ENCODE measurements at regions of chr14 and their contacts with region 1.

Region 1: DNA sequence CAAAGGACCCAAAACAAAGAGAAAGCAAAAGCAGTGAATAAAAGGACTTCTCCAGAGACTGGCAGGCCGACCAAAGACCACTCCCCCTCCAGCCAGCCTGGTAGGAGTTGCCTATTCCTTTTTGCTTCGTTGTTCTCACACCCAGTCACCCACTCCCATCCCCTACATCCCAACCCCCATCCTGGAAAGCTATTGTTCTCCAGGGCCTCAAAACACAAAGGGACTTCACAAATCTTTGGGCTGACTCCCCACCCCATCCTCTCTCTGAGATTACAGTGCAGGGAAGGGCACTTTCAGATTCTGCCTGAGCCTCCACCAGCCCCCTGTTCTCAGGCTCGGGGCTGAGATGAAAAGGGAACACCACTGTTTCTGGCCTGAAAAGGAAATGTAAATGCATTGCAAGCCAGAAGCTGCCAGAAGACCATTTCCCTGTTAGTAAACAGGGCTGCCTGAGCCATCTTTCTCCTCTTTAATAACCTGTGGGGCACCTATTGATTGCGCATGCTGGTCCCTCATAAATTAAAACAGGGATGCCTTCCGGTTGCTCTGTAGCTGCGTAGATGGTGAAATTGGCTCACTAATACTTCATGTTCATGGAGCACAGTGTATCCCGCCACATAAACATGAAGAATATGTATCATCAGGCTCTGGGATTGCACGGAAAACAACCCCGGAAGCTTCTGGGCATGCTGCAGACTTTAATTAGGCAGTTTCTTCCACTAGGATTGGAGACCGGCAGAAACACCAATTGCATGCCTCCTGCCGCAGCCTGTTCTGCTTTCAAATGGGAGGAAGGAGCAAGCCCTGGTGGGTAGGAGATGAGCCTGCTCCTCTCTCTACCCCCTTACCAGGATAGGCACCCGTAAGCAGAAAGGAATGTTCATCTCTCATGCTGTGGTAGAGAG is 130.3 kb upstream of the FUT8 start:
- DNase-seq: no peak
- ATAC-seq: no peak
- H3K4me3 ChIP-seq: no peak overlapping the region
- H3K27ac ChIP-seq: no peak overlapping the region
- H3K4me1 ChIP-seq: peaks cover 0 to 10% of the 10 kb centered on the region in 2 experiments; a peak in 3 of 5 replicates
- H3K27me3 ChIP-seq: peaks cover 0 to 3% of the 10 kb centered on the region in 2 experiments; a peak in 1 of 5 replicates
- CTCF ChIP-seq: no peak
- EP300 ChIP-seq: no peak
- POLR2A ChIP-seq: no peak
- RAD21 ChIP-seq: no peak

Region 2: DNA sequence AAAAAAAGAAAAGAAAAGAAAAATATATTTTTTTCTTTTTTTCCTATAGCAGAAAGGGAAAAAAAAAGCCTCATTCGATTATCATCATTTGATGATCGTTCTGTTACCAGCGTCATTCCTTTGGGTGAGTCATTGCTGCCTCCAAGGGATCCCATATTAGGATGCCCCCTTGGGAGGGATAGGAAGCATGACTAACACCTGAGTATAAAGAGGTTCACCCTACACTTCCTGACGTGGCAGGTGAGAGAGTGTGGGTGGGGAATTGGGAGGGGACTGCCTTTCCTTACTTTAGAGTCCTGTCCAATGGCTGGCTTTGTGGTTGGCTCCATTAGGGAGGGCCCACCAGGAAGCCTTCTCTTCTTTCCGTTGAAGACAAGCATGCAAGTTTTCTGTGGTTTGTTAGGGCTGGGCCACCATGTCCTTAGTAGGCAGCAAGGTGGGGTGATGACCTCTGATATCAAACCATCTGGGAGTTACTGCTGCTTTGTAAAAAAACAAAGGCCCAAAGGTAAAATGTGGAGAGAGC is 74.1 kb after region 1 on chr14:
- CTCF ChIA-PET with region 1: no interaction called
- POLR2A ChIA-PET with region 1: no interaction called
- in situ Hi-C with region 1: no loop called
- intact Hi-C with region 1: no loop called
- DNase-seq: peak in 2 of 4 experiments; percentile 11 to 14
- ATAC-seq: peak; percentile 29; the same call in 1 of the 3 replicates
- H3K4me3 ChIP-seq: no peak overlapping the region
- H3K27ac ChIP-seq: no peak overlapping the region
- H3K4me1 ChIP-seq: no peaks in the 10 kb centered on the region; a peak in 2 of 5 replicates
- H3K27me3 ChIP-seq: no peaks in the 10 kb centered on the region
- CTCF ChIP-seq: no peak
- EP300 ChIP-seq: no peak
- POLR2A ChIP-seq: no peak
- RAD21 ChIP-seq: no peak

Region 3: GRCh38 chr14:65604936-65605335 is 322.7 kb after region 1 on chr14:
- CTCF ChIA-PET with region 1: no interaction called
- POLR2A ChIA-PET with region 1: no interaction called
- in situ Hi-C with region 1: no loop called
- intact Hi-C with region 1: loop called (anchors 10 kb)
- DNase-seq: no peak
- ATAC-seq: no peak
- H3K4me3 ChIP-seq: no peak overlapping the region
- H3K27ac ChIP-seq: no peak overlapping the region
- H3K4me1 ChIP-seq: no peaks in the 10 kb centered on the region
- H3K27me3 ChIP-seq: no peaks in the 10 kb centered on the region
- CTCF ChIP-seq: peak in 1 of 3 experiments; percentile 52; a peak in 2 of 6 replicates
- EP300 ChIP-seq: no peak
- POLR2A ChIP-seq: no peak
- RAD21 ChIP-seq: peak; percentile 51 to 62

Measured in K562 (cell line).